Lower leg skin (tissue), 4 donors: ENCODE measurements at regions of chr11 and their contacts with region 1.

Region 1: DNA sequence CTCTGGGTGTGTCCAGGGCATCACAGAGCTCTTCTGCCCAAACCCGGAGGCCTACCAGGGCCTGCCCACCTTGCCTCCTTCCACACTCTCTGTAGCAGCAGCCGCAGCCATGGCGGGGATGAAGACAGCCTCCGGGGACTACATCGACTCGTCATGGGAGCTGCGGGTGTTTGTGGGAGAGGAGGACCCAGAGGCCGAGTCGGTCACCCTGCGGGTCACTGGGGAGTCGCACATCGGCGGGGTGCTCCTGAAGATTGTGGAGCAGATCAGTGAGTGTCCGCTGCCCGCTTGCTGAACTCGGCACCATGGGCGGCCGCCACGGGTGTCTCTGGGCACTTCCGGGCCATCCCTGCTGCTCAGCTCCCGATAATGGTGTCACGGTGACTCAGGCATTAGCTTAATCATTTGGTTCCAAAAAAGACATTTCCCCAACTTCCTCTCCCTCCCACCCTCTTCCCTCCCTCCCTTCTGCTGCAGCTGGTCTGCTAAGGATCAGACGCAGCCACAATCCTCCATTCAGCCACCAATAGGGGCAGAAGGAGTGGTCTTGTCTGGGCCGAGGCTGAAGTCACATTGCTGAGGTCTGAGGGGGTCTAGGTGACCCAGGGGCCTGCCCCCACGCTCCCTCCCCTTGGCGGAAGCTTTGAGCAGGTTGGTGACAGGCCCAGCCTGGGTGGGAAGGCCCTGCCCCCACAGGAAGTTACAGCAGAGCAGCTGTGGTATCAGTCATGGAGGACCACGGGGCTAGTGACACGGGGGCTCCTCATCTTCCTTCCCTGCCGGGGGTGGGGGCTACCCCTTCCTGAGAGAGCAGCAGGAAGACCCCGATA is 950 bp downstream of the FERMT3 start:
- DNase-seq: peak; percentile 58 to 92
- H3K4me3 ChIP-seq: peak overlapping the region; percentile 20
- CTCF ChIP-seq: no peak
- POLR2A ChIP-seq: no peak

Region 2: DNA sequence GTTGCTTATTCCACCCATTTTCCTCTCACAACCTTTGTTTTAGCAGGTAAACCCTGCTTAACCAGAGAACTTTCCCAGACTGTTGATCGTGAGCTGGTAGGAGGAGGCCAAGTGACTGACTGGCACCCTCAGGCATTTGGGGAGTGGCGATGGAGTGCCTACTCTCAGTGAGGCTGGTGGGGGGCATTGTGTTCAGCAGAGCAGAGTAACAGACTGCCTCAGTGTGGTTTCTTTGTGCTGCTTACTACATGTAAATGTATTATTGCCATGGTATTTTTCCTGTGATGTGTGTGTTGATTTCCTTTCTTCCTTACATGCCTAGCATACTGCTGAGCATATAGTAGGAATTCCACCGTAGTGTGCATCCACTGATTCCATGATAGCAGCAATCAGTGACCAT is 365.9 kb before region 1 on chr11:
- intact Hi-C with region 1: no loop called
- DNase-seq: no peak
- H3K4me3 ChIP-seq: no peak overlapping the region
- CTCF ChIP-seq: no peak
- POLR2A ChIP-seq: no peak

Region 3: DNA sequence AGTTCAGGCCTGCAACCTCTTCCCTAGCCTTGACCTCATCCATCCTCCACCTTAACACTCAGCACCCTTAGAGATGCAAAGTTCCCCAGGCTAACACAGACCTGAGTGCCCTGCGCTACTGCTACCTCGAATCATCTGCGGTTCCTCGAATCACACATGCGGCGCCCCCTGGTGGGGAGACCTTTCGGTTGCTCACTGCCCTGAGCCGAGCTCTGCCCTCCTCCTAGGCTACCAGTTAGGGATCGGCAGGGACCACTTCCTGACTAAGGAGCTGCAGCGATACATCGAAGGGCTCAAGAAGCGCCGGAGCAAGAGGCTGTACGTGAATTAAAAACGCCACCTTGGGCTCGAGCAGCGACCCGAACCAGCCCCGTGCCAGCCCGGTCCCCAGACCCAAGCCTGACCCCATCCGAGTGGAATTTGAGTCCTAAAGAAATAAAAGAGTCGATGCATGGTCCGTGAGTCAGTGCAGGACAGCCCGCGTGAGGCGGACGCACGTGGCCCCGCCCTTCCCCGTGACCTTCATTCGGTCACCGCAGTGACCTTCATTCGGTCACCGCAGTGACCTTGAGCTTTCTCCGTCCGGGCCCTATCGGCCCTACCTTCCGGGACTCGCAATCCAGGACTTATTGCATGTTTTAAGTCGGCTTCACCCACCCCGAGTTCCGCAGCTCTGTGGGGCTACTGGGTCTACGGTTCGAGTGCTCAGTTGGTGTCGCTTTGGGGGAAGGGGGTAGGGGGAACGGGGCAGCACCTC is 97.0 kb after region 1 on chr11:
- intact Hi-C with region 1: loop called (anchors 5 kb)
- DNase-seq: peak; percentile 92 to 99
- H3K4me3 ChIP-seq: peak overlapping the region; percentile 25
- CTCF ChIP-seq: peak in 1 of 3 donors; percentile 79
- POLR2A ChIP-seq: no peak

Region 4: GRCh38 chr11:64935359-64936081 is 728.0 kb after region 1 on chr11 and contains the start of gene GPHA2:
- intact Hi-C with region 1: loop called (anchors 5 kb)
- DNase-seq: peak in 1 of 2 donors; percentile 69
- H3K4me3 ChIP-seq: no peak within 1 kb of the TSS
- CTCF ChIP-seq: no peak
- POLR2A ChIP-seq: no peak
- total RNA-seq, gene GPHA2: not detected

Region 5: DNA sequence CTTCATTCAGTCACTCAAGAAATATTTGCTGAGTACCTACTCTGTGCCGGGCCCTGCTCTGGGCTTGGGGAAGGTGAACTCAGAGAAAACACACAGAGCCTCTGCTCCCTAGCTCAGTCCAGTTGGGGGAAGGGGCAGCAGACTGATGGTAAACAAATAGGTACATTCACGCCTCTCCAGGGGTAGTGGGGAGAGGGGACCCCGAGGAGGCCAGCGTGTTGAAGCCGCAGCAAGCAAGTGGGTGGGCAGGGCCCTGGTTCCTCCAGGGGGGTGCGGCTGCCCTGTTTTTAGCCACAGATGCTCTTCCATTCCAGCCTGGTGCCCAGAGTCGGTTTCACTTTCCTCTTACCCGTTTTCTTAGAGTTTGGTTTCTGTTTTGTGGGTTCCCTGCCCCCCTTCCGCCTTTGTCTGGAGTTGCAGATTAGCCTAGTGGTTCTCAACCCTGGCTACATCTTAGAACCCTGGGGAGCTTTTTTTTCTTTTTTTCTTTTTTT is 1720.5 kb after region 1 on chr11:
- intact Hi-C with region 1: no loop called
- DNase-seq: peak in 1 of 2 donors; percentile 80
- H3K4me3 ChIP-seq: no peak overlapping the region
- CTCF ChIP-seq: no peak
- POLR2A ChIP-seq: no peak